GM23248 (cell line): ENCODE measurements at regions of chr5 and their contacts with region 1.

Region 1: GRCh38 chr5:55994574-55995333 is at the start of gene IL6ST:
- DNase-seq: peak; percentile 99
- H3K4me3 ChIP-seq: peak within 1 kb of the TSS; percentile 97
- H3K27ac ChIP-seq: peak within 1 kb of the TSS; percentile 89
- H3K4me1 ChIP-seq: peaks cover 45% of the 10 kb centered on the region
- H3K27me3 ChIP-seq: no peaks in the 10 kb centered on the region
- total RNA-seq, gene IL6ST: 186 and 197 TPM in 2 replicates

Region 2: GRCh38 chr5:56175488-56175887 is 180.7 kb after region 1 on chr5:
- in situ Hi-C with region 1: loop called (anchors 10 kb)
- DNase-seq: peak; percentile 86
- H3K4me3 ChIP-seq: peak overlapping the region; percentile 19; the same call in 1 of the 2 replicates
- H3K27ac ChIP-seq: peak overlapping the region; percentile 38
- H3K4me1 ChIP-seq: peaks cover 39% of the 10 kb centered on the region
- H3K27me3 ChIP-seq: no peaks in the 10 kb centered on the region

Region 3: DNA sequence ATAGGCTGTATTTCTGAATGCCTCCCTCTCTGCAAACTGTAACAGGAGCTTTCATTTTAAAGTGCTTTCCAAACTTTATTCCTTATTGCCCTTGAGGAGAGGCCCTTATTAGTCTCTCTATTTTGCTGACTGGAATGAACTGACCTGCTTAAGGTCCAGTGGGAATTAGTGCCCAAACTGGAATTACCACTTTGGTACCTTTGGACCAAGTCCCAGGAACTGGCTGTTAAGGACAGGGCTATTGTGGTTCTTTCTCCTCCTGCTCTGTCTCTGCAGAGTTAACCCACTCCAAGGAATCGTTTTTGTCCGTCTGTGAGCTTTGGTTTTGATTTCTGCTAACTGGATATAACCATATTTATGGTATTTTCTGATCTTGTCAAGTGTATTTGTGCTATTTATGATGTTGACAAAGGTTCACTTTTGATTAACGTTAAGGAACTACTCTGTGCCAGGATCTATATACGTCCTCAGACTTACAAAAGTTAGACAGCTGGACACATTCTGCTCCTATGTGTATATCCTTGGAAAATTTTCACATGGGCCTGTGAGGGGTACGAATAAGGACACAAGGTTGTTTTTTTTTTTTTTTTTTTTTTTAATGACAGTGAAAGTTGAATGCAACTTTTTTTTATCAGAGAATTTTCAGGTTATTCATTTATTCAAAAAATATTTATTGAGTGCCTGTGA is 427.5 kb after region 1 on chr5:
- in situ Hi-C with region 1: no loop called
- DNase-seq: no peak
- H3K4me3 ChIP-seq: no peak overlapping the region
- H3K27ac ChIP-seq: no peak overlapping the region
- H3K4me1 ChIP-seq: no peaks in the 10 kb centered on the region
- H3K27me3 ChIP-seq: no peaks in the 10 kb centered on the region

Region 4: GRCh38 chr5:56838409-56839039 is 843.8 kb after region 1 on chr5:
- in situ Hi-C with region 1: loop called (anchors 25 kb)
- DNase-seq: peak; percentile 76
- H3K4me3 ChIP-seq: peak overlapping the region; percentile 71
- H3K27ac ChIP-seq: peak overlapping the region; percentile 48
- H3K4me1 ChIP-seq: peaks cover 11% of the 10 kb centered on the region
- H3K27me3 ChIP-seq: no peaks in the 10 kb centered on the region